RWPE1 (cell line): ENCODE measurements at regions of chr17 and their contacts with region 1.

Region 1: GRCh38 chr17:49556223-49556971 is 19.3 kb upstream of the NXPH3 start:
- DNase-seq: peak; percentile 77
- H3K27ac ChIP-seq: peak overlapping the region; percentile 56; the same call in 1 of the 2 replicates
- CTCF ChIP-seq: peak; percentile 99

Region 2: GRCh38 chr17:49414622-49415350 is 141.6 kb before region 1 on chr17 and contains the start of gene PHB1:
- CTCF ChIA-PET with region 1: interaction called, 45 read pairs
- POLR2A ChIA-PET with region 1: no interaction called
- DNase-seq: peak; percentile 98
- H3K27ac ChIP-seq: peak within 1 kb of the TSS; percentile 51
- CTCF ChIP-seq: no peak

Region 3: GRCh38 chr17:49486012-49486641 is 70.3 kb before region 1 on chr17:
- CTCF ChIA-PET with region 1: interaction called, 16 read pairs
- POLR2A ChIA-PET with region 1: no interaction called
- DNase-seq: no peak
- H3K27ac ChIP-seq: no peak overlapping the region
- CTCF ChIP-seq: no peak

Region 4: DNA sequence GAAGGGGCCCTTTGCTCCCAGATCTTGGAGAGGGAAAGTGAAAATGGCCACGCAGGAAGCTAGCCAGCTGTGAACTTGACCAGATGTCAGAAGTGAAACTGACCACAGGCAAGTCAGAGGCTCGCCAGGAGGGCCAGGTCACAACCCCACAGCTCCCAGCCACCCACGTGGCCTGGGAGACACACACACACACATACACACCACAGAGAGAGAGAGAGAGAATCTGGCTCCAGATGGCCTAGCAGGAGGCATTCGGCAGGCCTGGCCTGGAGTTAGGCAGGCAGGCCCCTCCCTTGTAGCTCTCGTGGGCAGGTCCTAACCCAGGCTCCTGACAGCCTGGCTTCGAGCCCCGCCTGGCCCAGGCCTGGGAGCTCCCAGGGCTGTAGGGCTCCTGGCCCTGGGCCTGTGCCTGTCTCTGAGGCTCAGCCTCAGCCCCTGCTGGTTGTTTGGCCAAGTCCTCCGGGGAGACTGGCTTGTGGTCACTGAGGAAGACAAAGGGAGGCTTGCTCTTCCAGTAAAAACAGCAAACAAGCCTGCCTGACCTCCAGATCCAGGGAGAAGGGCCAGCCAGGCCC is 41.1 kb before region 1 on chr17:
- CTCF ChIA-PET with region 1: interaction called, 12 read pairs
- POLR2A ChIA-PET with region 1: no interaction called
- DNase-seq: peak; percentile 48
- H3K27ac ChIP-seq: peak overlapping the region; percentile 88
- CTCF ChIP-seq: no peak

Region 5: GRCh38 chr17:49567871-49568694 is 11.7 kb after region 1 on chr17:
- CTCF ChIA-PET with region 1: interaction called, 14 read pairs
- POLR2A ChIA-PET with region 1: no interaction called
- DNase-seq: peak; percentile 71
- H3K27ac ChIP-seq: no peak overlapping the region
- CTCF ChIP-seq: peak; percentile 96